ENCODE measurements at regions of chr12 and their contacts with region 1.

Region 1: GRCh38 chr12:47837190-47838171 is 17.8 kb upstream of the HDAC7 start:
- DNase-seq: peak; percentile 66
- H3K4me3 ChIP-seq: no peak overlapping the region
- H3K27ac ChIP-seq: no peak overlapping the region
- H3K4me1 ChIP-seq: no peaks in the 10 kb centered on the region
- H3K27me3 ChIP-seq: no peaks in the 10 kb centered on the region
- CTCF ChIP-seq: peak; percentile 92 to 98 (median 94)
- POLR2A ChIP-seq: no peak

Region 2: DNA sequence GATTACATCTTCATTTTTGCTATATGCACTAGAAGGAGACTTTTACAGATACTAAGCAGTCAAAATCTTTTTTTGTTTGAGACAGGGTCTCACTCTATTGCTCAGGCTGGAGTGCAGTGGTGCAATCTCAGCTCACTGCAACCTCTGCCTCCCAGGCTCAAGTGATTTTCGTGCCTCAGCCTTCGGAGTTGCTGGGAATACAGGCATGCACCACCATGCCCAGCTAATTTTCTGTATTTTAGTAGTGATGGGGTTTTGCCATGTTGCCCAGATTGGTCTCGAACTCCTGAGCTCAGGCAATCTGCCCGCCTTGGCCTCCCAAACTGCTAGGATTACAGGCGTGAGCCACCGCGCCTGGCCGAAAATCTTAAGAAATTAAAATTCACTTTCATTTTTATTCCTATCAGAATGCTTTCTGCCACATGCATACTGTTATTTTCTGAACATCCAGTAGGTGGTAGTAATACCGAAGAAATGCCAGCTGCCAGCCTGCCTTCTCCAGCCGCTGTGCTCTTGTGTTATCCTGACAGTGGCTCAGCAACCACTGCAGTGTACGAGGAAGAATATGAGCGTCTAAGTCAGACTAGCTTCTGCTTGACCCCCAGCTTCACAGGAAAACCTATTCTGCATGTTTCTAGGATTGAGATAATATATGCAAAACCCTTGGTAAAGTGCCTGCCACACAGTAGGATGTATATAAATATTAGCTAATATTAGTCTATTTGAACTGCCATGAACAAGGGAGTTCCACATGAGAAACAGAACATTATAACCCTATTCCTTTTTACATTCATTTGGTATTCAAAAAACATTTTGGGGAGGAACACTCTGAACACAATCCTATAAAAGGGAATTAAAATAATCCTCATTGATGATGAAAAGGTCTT is 185.9 kb before region 1 on chr12:
- intact Hi-C with region 1: loop called (anchors 2 kb)
- DNase-seq: peak; percentile 43
- H3K4me3 ChIP-seq: no peak overlapping the region
- H3K27ac ChIP-seq: no peak overlapping the region
- H3K4me1 ChIP-seq: peaks cover 2% of the 10 kb centered on the region
- H3K27me3 ChIP-seq: no peaks in the 10 kb centered on the region
- CTCF ChIP-seq: peak; percentile 36 to 75 (median 62)
- POLR2A ChIP-seq: no peak

Region 3: GRCh38 chr12:47779301-47779942 is 58.1 kb before region 1 on chr12:
- intact Hi-C with region 1: loop called (anchors 5 kb)
- DNase-seq: peak; percentile 84
- H3K4me3 ChIP-seq: no peak overlapping the region
- H3K27ac ChIP-seq: no peak overlapping the region
- H3K4me1 ChIP-seq: peaks cover 12% of the 10 kb centered on the region
- H3K27me3 ChIP-seq: no peaks in the 10 kb centered on the region
- CTCF ChIP-seq: peak; percentile 79 to 96 (median 95)
- POLR2A ChIP-seq: no peak

Region 4: DNA sequence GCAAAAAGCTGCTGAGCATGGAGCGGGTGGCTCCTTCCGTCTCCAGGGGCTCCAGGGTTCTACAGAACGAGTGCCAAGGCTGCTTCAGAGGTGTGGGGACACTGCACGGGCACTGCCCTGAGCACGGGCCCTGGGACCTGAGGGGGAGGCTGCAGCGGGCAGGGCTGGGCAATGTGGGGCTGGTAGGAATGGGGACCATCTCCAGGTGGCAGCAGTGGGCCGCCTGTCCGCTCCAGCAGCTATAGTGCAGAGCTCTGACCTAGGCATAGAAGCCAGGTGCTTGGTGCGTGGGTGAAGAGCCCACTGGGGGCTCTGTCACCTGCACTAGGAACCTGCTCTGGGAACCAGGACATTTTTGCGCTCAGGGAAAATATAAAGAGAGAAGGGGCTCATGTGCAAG is 40.0 kb before region 1 on chr12:
- intact Hi-C with region 1: loop called (anchors 5 kb)
- DNase-seq: no peak
- H3K4me3 ChIP-seq: no peak overlapping the region
- H3K27ac ChIP-seq: no peak overlapping the region
- H3K4me1 ChIP-seq: peaks cover 12% of the 10 kb centered on the region
- H3K27me3 ChIP-seq: no peaks in the 10 kb centered on the region
- CTCF ChIP-seq: peak in 1 of 4 experiments; percentile 38
- POLR2A ChIP-seq: no peak